ENCODE measurements at regions of chr1 and their contacts with region 1.

Region 1: DNA sequence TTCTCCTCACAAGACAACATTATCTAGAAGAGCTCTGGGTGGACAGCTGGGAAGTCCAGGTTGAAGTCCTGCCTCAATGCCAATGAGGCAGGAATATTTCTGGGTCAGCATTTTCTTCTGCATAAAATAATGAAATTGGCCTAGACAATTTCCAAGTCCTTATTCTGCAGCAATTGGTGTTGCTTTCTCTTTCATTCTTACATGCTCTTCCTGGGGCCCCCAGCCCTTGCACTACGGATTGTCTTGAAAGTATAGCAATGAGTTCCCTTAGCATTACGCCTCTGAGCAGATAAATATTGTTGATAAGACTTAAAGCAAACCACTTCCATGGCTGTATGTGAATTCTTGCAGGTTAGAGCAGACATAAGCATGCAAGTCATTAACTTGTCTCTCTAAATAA is 188.5 kb downstream of the TGFBR3 start:
- DNase-seq: peak; percentile 77
- H3K4me3 Mint-ChIP-seq: peak overlapping the region; percentile 48
- H3K27ac Mint-ChIP-seq: peak overlapping the region; percentile 54
- H3K4me1 Mint-ChIP-seq: peaks cover 31% of the 10 kb centered on the region
- H3K27me3 Mint-ChIP-seq: no peaks in the 10 kb centered on the region

Region 2: GRCh38 chr1:91732291-91733107 is 35.1 kb after region 1 on chr1:
- CTCF ChIA-PET with region 1: no interaction called
- POLR2A ChIA-PET with region 1: no interaction called
- intact Hi-C with region 1: loop called (anchors 1 kb)
- DNase-seq: peak; percentile 65
- H3K4me3 Mint-ChIP-seq: peak overlapping the region; percentile 24
- H3K27ac Mint-ChIP-seq: peak overlapping the region; percentile 29
- H3K4me1 Mint-ChIP-seq: peaks cover 50% of the 10 kb centered on the region
- H3K27me3 Mint-ChIP-seq: no peaks in the 10 kb centered on the region